ENCODE measurements at regions of chr9 and their contacts with region 1.

Region 1: DNA sequence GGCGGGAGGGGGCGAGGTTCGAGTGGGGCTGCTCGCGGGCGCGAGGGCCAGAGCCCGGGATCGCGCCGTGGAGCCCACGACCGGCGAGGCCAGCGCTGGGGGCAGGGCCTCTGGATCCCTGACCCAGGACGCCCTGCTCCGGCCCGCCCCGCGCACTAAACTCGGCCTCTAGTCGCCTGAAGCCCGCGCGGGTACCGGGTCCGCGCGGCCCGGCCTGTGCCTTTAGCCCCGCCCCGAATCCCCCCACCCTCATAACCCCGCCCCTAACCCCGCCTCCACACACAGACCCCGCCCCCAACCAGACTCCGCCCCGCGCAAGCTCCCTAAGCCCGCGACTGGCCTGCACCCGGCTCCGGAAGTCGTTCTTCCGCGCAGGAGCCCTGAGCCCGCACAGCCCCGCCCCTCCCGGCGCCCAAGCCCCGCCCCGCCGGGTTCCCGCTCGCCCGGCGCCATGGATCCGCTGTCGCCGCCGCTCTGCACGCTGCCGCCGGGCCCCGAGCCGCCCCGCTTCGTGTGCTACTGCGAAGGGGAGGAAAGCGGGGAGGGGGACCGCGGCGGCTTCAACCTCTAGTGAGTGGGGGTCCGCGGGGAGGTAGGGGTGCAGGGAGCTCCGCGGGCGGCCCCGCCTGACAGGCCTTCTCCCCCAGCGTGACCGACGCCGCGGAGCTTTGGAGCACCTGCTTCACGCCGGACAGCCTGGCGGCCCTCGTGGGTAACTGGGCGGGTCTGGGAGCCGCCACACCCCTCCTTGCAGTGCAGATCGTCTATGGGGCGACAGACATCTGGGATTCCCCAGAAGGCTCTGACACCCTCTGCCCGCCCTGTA is at the start of gene PAXX:
- DNase-seq: peak; percentile 93
- H3K4me3 Mint-ChIP-seq: peak within 1 kb of the TSS; percentile 87
- H3K27ac Mint-ChIP-seq: peak within 1 kb of the TSS; percentile 84
- H3K4me1 Mint-ChIP-seq: peaks cover 24% of the 10 kb centered on the region
- H3K27me3 Mint-ChIP-seq: peaks cover 26% of the 10 kb centered on the region
- total RNA-seq, gene PAXX: 79.4 and 84.5 TPM in 2 replicates

Region 2: DNA sequence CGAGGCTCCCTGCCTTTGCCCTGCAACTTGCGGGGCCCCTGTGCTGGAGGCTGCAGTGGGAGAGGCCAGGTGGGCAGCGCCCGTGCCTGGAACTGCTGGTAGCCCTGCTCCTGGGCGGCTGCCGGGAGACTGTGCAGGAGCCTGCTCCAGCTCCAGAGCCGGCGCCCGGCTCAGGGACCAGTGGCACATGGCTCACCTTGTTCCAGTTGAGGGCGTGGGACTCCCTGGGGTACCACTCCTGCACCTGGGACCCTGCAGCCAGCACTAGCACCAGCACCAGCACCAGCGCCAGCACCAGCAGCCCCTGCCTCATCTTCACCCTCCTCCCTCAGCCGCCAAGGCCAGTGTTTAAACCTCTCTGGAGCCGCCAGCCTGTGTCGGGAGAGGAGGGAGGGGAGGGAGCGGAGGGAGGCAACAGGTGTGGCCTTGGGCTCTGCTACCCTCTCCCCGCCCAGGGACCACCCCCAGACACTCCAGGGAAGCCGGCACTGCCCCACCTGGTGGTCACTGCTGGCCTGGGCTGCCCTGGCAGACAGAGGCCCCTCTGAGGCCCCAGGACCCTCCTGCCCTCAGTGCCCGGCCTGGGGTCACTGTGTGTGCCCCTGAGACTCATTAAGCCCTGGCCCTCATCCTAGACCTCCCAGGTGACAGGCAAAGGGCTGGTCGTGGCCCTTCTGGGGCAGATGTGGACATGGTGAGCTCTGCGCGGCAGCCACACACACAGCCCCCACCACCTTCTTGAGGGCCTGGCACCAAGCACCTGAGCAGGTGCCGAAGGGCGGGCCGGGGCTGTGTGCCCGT is 249.4 kb before region 1 on chr9 and contains the start of gene LCN10:
- intact Hi-C with region 1: no loop called
- DNase-seq: no peak
- H3K4me3 Mint-ChIP-seq: no peak within 1 kb of the TSS
- H3K27ac Mint-ChIP-seq: no peak within 1 kb of the TSS
- H3K4me1 Mint-ChIP-seq: peaks cover 6% of the 10 kb centered on the region
- H3K27me3 Mint-ChIP-seq: peaks cover 2% of the 10 kb centered on the region
- total RNA-seq, gene LCN10: 0.39 and 0.59 TPM in 2 replicates

Region 3: DNA sequence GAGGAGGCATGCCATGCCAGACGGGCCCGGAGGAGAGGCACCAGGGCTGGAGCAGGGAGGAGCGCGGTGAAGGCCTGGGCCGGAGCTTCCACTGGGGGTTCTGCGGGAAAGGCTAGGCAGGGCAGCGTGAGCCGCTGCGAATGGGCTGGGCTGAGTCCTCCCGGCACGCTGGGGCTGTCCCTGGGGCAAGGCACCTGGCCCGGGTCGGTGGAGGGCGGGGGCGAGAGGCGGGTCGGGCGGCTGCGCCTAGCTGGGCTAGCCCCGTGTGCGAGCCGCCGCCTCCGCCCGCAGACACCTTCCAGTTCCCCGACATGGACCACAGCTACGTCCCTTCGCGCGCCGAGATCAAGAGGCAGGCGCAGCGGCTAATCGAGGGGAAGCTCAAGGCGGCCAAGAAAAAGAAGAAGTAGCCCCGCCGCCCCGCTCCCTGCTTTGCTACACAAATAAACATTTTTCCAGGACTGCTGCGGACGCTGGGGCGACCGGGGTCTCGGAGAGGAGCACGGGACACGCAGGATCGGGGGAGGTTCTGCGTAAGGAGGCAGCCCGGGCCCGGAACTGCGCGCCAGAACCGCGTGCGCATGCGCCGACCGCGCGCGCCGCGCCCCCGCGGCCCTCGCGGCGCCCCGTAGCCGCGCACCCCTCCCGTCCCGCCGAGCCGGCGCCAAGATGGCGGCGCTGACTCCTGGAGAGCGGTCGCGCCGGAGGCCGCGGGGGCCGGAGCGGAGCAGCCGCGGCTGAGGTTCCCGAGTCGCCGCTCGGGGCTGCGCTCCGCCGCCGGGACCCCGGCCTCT is 184.7 kb before region 1 on chr9 and contains the start of gene RABL6:
- intact Hi-C with region 1: loop called (anchors 1 kb)
- DNase-seq: peak; percentile 82
- H3K4me3 Mint-ChIP-seq: peak within 1 kb of the TSS; percentile 85
- H3K27ac Mint-ChIP-seq: peak within 1 kb of the TSS; percentile 90
- H3K4me1 Mint-ChIP-seq: peaks cover 28% of the 10 kb centered on the region
- H3K27me3 Mint-ChIP-seq: peaks cover 4% of the 10 kb centered on the region
- total RNA-seq, gene RABL6: 109 and 114 TPM in 2 replicates

Region 4: DNA sequence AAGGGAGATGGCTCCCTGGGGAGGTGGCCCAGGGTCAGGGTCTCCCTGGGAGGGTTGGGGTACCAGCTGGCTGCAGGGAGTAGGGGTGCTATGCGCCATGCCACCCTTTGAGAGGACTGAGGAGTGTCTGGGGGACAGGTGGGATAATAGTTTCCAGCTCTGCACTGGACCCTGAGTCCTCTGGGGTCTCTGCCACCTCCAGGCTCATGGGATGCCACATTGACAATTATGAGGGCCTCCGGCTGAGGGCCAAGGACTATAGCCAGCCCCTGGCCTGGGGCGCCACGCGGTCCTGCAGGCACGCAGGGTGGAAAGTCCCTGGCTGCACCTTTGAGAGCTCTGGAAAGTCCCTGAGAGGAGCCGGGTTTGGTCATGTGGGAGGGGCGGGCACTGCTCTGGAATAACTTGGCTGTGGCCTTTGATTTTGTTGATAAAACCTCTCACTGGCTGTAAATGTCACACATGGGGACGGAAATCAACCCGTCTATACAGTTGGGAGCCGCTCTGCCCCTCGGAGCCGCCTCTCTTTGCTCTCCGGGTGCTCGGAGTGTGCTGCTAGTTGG is 89.9 kb before region 1 on chr9:
- intact Hi-C with region 1: loop called (anchors 5 kb)
- DNase-seq: peak; percentile 88
- H3K4me3 Mint-ChIP-seq: peak overlapping the region; percentile 80
- H3K27ac Mint-ChIP-seq: peak overlapping the region; percentile 99
- H3K4me1 Mint-ChIP-seq: peaks cover 63% of the 10 kb centered on the region
- H3K27me3 Mint-ChIP-seq: no peaks in the 10 kb centered on the region

Region 5: DNA sequence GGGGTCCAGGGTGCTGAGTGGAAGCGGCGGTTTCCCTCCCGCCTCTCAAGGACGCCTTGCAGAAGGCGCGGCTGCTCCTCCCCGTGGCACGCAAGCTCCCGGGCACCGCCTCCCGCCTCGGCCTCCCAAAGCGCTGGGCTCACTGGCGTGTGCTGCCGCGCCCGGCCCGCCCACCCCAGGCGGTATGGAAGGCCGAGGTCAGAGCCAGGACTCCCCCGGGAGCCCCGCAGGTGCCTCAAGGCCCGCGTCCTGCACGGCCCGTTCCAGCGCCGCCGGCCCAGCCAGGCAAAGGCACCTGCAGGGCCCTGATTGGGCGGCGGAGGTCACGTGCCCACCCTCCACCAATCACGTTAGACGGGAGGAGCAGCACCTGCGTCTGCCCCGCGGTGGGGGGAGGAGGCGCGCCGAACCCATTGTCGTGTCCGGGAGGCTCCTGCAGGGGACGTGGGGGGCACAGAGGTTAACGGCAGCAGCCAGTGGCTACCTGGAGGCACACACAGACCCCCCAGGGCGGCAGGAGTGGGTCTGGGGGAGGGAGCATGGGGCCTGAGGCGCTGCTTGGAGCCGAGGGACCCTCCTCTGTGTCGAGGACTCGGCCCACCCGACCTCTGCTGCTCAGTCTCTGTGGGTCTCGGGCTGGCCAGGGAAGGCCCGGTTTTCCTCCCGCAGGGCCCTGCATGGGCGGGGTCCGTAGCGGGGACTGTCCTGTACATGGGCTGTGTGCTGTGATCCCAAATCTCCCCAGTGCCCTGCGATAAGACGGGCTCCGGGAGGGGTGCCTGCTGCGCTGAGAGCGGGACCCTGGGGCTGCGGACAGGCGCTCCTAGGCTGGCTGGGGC is 42.2 kb before region 1 on chr9:
- intact Hi-C with region 1: loop called (anchors 1 kb)
- DNase-seq: peak; percentile 94
- H3K4me3 Mint-ChIP-seq: peak overlapping the region; percentile 84
- H3K27ac Mint-ChIP-seq: peak overlapping the region; percentile 83
- H3K4me1 Mint-ChIP-seq: no peaks in the 10 kb centered on the region
- H3K27me3 Mint-ChIP-seq: no peaks in the 10 kb centered on the region

Region 6: DNA sequence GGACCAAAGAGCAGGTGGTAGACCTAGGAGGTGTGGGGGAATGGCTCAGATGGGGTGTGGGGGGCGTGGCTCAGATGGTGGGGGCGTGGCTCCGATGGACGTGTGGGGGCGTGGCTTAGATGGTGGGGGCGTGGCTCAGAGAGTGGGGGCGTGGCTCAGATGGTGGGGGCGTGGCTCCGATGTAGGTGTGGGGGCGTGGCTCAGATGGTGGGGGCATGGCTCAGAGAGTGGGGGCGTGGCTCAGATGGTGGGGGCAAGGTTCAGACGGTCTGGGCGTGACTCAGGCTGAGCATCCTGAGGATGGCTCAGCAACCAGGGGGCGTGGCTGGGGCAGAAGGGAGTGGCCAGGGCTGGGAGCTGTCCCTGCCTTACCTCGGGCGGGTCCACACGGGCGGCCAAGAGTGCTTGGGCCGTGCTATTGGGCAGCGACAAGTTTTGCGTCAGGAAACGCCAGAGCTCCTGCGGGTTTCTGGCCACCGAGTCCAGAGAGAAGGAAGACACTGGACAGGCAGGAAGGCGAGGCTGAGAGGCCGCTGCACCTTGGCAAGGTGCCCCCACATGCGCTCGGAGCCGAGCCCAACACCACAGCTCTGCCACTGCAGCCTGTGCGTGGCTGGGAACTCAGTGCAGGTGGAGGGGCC is 29.9 kb after region 1 on chr9:
- intact Hi-C with region 1: loop called (anchors 1 kb)
- DNase-seq: peak; percentile 64
- H3K4me3 Mint-ChIP-seq: no peak overlapping the region
- H3K27ac Mint-ChIP-seq: peak overlapping the region; percentile 29
- H3K4me1 Mint-ChIP-seq: no peaks in the 10 kb centered on the region
- H3K27me3 Mint-ChIP-seq: no peaks in the 10 kb centered on the region

Region 7: DNA sequence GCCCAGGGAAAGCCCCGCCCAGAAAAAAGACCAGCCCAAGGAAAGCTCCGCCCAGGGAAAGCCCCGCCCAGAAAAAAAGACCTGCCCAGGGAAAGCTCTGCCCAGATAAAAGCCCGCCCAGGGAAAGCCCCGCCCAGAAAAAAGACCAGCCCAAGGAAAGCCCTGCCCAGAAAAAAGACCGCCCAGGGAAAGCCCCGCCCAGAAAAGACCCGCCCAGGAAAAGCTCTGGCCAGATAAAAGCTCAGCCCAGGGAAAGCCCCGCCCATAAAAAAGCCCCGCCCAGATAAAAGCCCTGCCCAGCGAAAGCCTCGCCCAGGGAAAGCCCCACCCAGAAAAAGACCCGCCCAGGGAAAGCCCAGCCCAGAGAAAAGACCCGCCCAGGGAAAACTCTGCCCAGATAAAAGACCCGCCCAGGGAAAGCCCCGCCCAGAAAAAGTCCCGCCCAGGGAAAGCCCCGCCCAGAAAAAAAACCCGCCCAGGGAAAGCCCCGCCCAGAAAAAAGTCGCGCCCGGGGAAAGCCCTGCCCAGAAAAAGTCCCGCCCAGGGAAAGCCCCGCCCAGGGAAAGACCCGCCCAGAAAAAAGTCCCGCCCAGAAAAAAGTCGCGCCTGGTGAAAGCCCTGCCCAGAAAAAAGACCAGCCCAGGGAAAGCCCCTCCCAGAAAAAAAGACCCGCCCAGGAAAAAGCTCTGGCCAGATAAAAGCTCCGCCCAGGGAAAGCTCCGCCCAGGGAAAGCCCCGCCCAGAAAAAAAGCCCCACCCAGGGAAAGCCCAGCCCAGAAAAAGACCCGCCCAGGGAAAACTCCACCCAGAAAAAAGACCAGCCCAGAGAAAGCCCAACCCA is 158.6 kb after region 1 on chr9:
- intact Hi-C with region 1: loop called (anchors 1 kb)
- DNase-seq: peak; percentile 60
- H3K4me3 Mint-ChIP-seq: no peak overlapping the region
- H3K27ac Mint-ChIP-seq: no peak overlapping the region
- H3K4me1 Mint-ChIP-seq: peaks cover 4% of the 10 kb centered on the region
- H3K27me3 Mint-ChIP-seq: peaks cover 2% of the 10 kb centered on the region

Measured in activated T-helper 1 cell treated with anti-CD3 and anti-CD28 coated beads, Interleukin-12 subunit alpha, Interleukin-12 subunit beta, Interleukin-2, Interleukin-4 antibody, amounts not matched to agents 30 ng/mL and 10 ng/mL and 1 ng/mL, durations not matched to agents 14 hours and 24 hours and 36 hours (primary cell).